A549 (cell line): ENCODE measurements at regions of chr12 and their contacts with region 1.

Region 1: GRCh38 chr12:114648711-114649110 is 35.3 kb downstream of the TBX3 start:
- DNase-seq: no peak
- ATAC-seq: no peak
- H3K4me3 ChIP-seq: no peak overlapping the region
- H3K27ac ChIP-seq: no peak overlapping the region
- H3K4me1 ChIP-seq: no peaks in the 10 kb centered on the region
- CTCF ChIP-seq: no peak
- EP300 ChIP-seq: no peak
- POLR2A ChIP-seq: no peak
- RAD21 ChIP-seq: no peak

Region 2: DNA sequence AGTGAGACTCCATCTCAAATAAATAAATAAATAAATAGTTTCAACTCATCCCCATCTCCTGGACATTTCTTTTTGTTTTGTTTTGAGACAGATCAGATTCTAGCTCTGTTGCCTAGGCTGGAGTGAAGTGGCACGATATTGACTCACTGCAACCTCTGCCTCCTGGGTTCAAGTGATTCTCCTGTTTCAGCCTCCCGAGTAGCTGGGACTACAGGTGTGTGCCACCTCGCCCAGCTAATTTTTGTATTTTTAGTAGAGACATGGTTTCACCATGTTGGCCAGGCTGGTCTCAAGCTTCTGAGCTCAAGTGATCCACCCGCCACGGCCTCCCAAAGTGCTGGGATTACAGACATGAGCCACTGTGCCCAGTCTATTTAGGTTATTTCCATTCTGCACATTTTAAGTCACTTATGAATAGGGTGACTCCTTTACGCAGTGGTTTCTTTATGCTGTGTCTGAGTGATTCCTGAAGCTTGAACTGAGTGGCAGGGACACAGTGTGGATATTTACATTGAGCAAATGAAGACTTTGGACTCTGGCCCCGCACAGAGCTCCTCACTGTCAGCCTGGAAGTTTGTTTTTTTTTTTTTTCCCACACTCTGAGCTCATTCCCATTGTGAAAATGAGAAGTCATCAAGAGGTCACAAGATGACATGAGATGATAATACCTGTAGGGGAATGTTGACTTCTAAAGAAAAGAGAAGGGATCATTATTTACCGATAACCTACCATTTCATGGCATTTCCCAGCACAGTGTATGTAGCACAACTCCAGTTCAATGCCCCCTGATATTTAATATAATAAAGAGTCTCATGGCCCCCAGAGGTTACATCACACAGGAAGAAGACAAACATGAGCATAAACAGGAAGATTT is 37.3 kb before region 1 on chr12:
- CTCF ChIA-PET with region 1: no interaction called
- POLR2A ChIA-PET with region 1: no interaction called
- DNase-seq: peak; percentile 31 to 87
- ATAC-seq: peak; percentile 96 to 98
- H3K4me3 ChIP-seq: no peak overlapping the region
- H3K27ac ChIP-seq: peak overlapping the region; percentile 72
- H3K4me1 ChIP-seq: peaks cover 20% of the 10 kb centered on the region
- CTCF ChIP-seq: no peak
- EP300 ChIP-seq: peak in 1 of 2 experiments; percentile 31; a peak in 2 of 5 replicates
- POLR2A ChIP-seq: no peak
- RAD21 ChIP-seq: no peak

Region 3: GRCh38 chr12:114636723-114637483 is 11.8 kb before region 1 on chr12:
- CTCF ChIA-PET with region 1: interaction called, 11 read pairs
- POLR2A ChIA-PET with region 1: no interaction called
- DNase-seq: peak; percentile 48 to 58
- ATAC-seq: peak; percentile 81 to 83
- H3K4me3 ChIP-seq: no peak overlapping the region
- H3K27ac ChIP-seq: peak overlapping the region; percentile 43 to 76
- H3K4me1 ChIP-seq: peaks cover 11% of the 10 kb centered on the region; the same call in 1 of the 3 replicates
- CTCF ChIP-seq: peak; percentile 51
- EP300 ChIP-seq: no peak
- POLR2A ChIP-seq: no peak
- RAD21 ChIP-seq: peak; percentile 29 to 44; a peak in 3 of 5 replicates

Region 4: DNA sequence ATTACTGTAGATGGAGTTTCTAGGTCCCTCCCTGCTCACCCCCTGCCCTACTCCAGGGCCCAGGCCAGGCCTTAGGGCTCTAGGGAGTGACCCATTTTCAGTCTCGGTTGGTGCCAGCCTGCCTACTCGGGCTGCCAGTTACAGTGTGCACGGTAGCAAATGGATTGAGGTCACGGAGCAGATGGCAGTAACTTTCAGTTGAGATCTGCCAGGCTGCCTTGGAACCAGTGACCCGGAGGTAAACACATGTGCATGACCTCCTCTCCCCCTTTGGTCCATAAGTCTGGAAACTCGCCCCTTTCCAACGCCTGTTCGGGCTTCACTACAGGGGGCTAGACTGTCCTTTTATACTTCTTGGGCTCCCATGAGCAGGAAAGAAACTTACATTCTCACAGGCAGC is 175.0 kb after region 1 on chr12:
- CTCF ChIA-PET with region 1: no interaction called
- POLR2A ChIA-PET with region 1: no interaction called
- DNase-seq: no peak
- ATAC-seq: no peak
- H3K4me3 ChIP-seq: no peak overlapping the region
- H3K27ac ChIP-seq: no peak overlapping the region
- H3K4me1 ChIP-seq: no peaks in the 10 kb centered on the region
- CTCF ChIP-seq: no peak
- EP300 ChIP-seq: no peak
- POLR2A ChIP-seq: no peak
- RAD21 ChIP-seq: no peak